HepG2 (cell line): ENCODE measurements at regions of chr16 and their contacts with region 1.

Region 1: DNA sequence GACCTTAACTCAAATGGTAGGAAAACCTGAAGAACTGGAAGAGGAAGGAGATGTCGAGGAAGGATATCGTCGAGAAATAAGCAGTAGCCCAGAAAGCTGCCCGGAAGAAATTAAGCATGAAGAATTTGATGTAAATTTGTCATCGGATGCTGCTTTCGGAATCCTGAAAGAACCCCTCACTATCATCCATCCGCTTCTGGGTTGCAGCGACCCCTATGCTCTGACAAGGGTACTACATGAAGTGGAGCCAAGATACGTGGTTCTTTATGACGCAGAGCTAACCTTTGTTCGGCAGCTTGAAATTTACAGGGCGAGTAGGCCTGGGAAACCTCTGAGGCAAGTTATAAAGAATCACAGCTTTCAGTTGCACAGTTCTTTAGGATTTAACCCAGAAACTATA is 15.5 kb downstream of the ERCC4 start:
- DNase-seq: peak; percentile 34
- ATAC-seq: no peak
- H3K4me3 ChIP-seq: no peak overlapping the region
- H3K27ac ChIP-seq: no peak overlapping the region
- H3K4me1 ChIP-seq: peaks cover 16% of the 10 kb centered on the region
- H3K27me3 ChIP-seq: no peaks in the 10 kb centered on the region
- CTCF ChIP-seq: peak; percentile 58
- EP300 ChIP-seq: no peak
- POLR2A ChIP-seq: no peak
- RAD21 ChIP-seq: no peak

Region 2: DNA sequence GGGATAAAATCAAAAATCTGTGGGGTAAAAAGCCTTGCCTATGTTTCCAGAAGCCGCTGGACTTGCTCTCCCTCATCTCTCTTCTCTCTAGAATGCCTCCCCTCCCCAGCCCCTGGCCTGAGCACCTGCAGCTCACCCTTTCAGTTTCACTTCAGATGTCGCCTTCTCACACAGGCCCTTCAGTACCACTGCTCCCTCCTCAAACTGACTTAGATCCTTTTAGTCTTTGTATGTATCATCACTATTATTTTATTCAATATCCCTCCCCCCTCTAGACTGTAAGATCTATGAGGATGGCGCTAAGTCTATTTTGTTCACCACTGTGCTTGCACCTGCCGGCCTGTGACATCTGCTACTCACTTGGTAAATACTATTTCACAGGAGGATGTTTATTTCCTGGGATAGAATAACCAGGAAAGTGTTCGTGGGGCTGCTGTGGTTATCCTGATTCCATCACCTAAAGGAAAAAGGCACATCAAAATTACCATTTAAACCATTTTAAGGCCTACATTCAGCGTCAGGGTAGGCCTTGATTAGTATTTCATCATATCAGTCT is 258.0 kb after region 1 on chr16:
- CTCF ChIA-PET with region 1: no interaction called
- POLR2A ChIA-PET with region 1: no interaction called
- in situ Hi-C with region 1: loop called (anchors 10 kb)
- intact Hi-C with region 1: no loop called
- DNase-seq: no peak
- ATAC-seq: no peak
- H3K4me3 ChIP-seq: no peak overlapping the region
- H3K27ac ChIP-seq: no peak overlapping the region
- H3K4me1 ChIP-seq: peaks cover 11% of the 10 kb centered on the region
- H3K27me3 ChIP-seq: no peaks in the 10 kb centered on the region
- CTCF ChIP-seq: no peak
- EP300 ChIP-seq: no peak
- POLR2A ChIP-seq: no peak
- RAD21 ChIP-seq: no peak